ENCODE measurements at regions of chr13 and their contacts with region 1.

Region 1: GRCh38 chr13:110412132-110412914 is 105.2 kb downstream of the COL4A2 start:
- DNase-seq: peak; percentile 87 to 92 (median 88)
- ATAC-seq: peak; percentile 80 to 86 (median 83)
- H3K4me3 ChIP-seq: no peak overlapping the region
- H3K27ac ChIP-seq: peak overlapping the region; percentile 51 to 95 (median 83)
- H3K4me1 ChIP-seq: peaks cover 11 to 97% (median 76%) of the 10 kb centered on the region in 12 donors
- H3K27me3 ChIP-seq: no peaks in the 10 kb centered on the region
- CTCF ChIP-seq: peak; percentile 87 to 99 (median 92)
- POLR2A ChIP-seq: peak in 1 of 2 donors; percentile 26

Region 2: DNA sequence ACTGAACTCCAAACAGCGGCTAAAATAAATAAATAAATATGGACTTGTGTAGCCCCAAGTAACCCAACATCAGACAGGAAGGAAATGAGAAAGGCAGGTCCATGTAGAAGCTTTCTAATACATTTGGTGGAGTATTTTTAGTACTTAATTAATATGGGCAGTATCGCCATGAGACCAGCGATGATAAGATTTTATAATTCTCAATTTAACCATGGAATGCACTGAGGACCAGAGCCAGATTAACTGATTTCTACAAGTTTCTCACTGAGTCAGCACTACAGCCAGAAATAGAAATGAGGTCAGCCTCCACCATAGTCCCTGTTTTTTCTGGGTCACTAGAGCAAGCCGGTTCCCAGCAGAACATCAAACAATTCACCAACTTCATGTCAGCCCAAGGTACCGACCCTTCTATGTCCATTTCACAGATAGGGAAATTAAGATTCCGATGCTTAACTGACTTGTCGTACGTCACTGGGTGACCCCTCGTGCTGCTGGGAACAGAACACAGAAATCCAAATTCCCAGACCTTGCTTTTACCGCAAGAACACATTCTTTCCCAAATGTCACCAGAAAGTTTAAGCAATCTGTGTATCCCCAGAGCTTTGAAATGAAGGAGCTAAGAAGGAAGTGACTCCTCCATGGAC is 195.8 kb before region 1 on chr13:
- intact Hi-C with region 1: loop called in 4 of 10 experiments (anchors 5 kb)
- DNase-seq: peak in 3 of 5 donors; percentile 37 to 56 (median 51)
- ATAC-seq: peak; percentile 61 to 68 (median 64)
- H3K4me3 ChIP-seq: no peak overlapping the region
- H3K27ac ChIP-seq: peak overlapping the region; percentile 28 to 81 (median 55)
- H3K4me1 ChIP-seq: peaks cover 6 to 72% (median 58%) of the 10 kb centered on the region in 12 donors
- H3K27me3 ChIP-seq: no peaks in the 10 kb centered on the region
- CTCF ChIP-seq: no peak
- POLR2A ChIP-seq: no peak

Region 3: GRCh38 chr13:110244071-110244830 is 168.1 kb before region 1 on chr13:
- intact Hi-C with region 1: loop called in 1 of 10 experiments (anchors 5 kb)
- DNase-seq: no peak
- ATAC-seq: peak in 2 of 4 donors; percentile 23 to 33
- H3K4me3 ChIP-seq: no peak overlapping the region
- H3K27ac ChIP-seq: peak overlapping the region; percentile 30 to 84 (median 68)
- H3K4me1 ChIP-seq: peaks cover 10 to 99% (median 81%) of the 10 kb centered on the region in 12 donors
- H3K27me3 ChIP-seq: no peaks in the 10 kb centered on the region
- CTCF ChIP-seq: no peak
- POLR2A ChIP-seq: no peak

Region 4: DNA sequence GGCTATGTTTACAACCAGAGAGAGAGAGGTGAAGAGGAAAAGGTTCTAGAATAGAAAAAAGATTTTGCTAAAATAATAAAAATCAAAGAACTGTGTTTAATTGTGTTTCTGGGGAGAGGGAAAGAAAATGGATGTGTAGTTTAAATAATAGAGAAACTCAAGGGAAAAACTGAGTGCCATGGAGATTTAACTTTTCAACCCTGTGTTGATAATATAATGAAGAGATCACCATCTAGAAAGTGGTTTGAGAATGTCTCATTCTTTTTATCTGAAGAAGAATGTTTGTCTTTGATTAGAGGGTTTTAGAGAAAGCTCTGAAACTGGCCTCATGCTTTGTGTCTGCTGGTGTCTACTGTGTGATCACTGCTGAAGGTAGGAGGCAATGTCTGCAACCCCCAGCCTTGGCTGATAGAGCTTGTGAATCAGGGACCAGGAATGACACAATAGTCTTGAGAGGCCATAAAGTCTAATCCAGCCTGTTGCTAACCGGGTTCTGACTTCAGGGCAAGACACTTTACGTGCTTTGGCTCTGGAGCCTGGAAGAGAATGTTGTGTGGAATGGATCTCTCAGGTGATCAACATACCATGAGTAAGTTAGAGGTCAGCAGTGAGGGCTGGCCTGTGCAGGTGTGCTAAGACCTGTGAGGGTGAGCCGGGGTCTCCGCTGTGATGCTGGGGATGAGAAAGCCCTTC is 99.8 kb before region 1 on chr13:
- intact Hi-C with region 1: loop called in 9 of 10 experiments (anchors 2 to 10 kb)
- DNase-seq: peak in 1 of 5 donors; percentile 14
- ATAC-seq: no peak
- H3K4me3 ChIP-seq: peak overlapping the region in 9 of 12 donors; percentile 67 to 93 (median 83)
- H3K27ac ChIP-seq: peak overlapping the region in 11 of 12 donors; percentile 50 to 99 (median 96)
- H3K4me1 ChIP-seq: peaks cover 17 to 90% (median 73%) of the 10 kb centered on the region in 12 donors
- H3K27me3 ChIP-seq: peaks cover 0 to 29% (median 0%) of the 10 kb centered on the region in 9 donors
- CTCF ChIP-seq: no peak
- POLR2A ChIP-seq: no peak

Region 5: DNA sequence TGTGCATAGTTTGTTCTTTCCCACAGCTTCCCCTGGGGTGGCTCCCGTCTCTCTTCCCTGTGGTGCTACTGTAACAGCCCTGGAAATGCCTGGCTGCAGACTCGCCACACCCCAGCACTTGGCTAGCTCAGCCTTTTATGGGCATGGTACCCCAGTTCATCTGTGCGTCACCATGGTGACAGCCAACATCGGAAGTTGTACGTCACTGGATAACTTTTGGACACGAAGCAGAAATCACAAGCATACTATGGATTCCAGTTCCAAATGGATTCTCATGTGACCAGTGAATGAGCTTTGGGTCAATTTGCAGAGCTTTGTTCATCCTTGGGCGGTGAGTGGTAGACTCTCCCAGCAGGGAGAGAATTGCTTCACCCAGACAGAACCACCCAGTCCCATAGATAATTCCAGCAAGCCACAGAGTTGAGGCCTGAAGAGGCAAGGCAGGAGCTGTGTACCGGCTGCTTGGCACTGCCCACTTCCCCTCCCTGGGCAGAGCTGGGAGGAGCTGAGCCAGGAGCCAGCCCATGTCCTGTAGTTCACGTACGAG is 50.9 kb before region 1 on chr13:
- intact Hi-C with region 1: loop called in 1 of 10 experiments (anchors 5 kb)
- DNase-seq: peak; percentile 79 to 88 (median 83)
- ATAC-seq: peak; percentile 86 to 93 (median 88)
- H3K4me3 ChIP-seq: peak overlapping the region in 1 of 12 donors; percentile 0
- H3K27ac ChIP-seq: peak overlapping the region; percentile 51 to 91 (median 79)
- H3K4me1 ChIP-seq: peaks cover 6 to 62% (median 42%) of the 10 kb centered on the region in 12 donors
- H3K27me3 ChIP-seq: no peaks in the 10 kb centered on the region
- CTCF ChIP-seq: no peak
- POLR2A ChIP-seq: no peak

Region 6: DNA sequence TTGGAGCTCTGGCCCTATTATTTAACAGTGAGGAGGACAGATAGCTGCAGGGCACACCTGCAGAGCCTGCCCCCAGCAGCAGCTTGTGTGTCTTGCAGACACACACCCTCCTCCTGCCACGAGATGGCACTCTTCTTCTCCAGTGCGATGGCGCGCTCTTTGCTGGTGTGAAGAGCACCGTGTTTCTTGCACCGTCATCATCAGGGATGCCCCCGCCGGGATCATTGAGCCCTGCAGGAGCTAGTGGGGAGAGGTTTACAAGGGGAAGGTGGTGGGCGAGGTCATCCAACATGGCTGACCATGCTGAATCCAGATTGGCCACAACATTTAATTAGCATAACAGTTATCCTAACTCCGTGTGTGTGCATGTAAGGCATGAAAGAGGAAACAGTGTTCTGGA is 43.6 kb after region 1 on chr13:
- intact Hi-C with region 1: no loop called
- DNase-seq: peak; percentile 69 to 86 (median 82)
- ATAC-seq: peak; percentile 62 to 89 (median 84)
- H3K4me3 ChIP-seq: no peak overlapping the region
- H3K27ac ChIP-seq: peak overlapping the region in 2 of 12 donors; percentile 17 to 33
- H3K4me1 ChIP-seq: peaks cover 0 to 15% (median 1%) of the 10 kb centered on the region in 12 donors
- H3K27me3 ChIP-seq: no peaks in the 10 kb centered on the region
- CTCF ChIP-seq: peak; percentile 56 to 89 (median 75)
- POLR2A ChIP-seq: no peak

Region 7: DNA sequence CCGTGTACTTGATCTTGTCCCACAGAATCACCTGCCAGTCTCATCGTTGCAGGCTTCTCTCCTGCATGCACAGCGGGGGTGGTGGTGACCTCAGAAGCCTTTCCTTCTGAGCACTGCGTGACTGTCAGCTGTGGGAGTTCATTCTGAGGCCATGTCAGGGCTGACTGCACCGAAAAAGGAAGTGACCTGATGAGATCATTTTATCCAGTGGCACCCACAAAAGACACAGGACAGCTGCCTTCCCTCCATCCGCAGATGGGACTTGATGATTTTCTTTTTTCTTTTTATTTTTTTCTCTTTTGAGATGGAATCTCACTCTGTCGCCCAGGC is 59.5 kb after region 1 on chr13:
- intact Hi-C with region 1: no loop called
- DNase-seq: peak in 4 of 5 donors; percentile 64 to 75 (median 72)
- ATAC-seq: peak; percentile 59 to 86 (median 70)
- H3K4me3 ChIP-seq: no peak overlapping the region
- H3K27ac ChIP-seq: peak overlapping the region in 7 of 12 donors; percentile 19 to 59 (median 43)
- H3K4me1 ChIP-seq: peaks cover 0 to 18% (median 6%) of the 10 kb centered on the region in 12 donors
- H3K27me3 ChIP-seq: no peaks in the 10 kb centered on the region
- CTCF ChIP-seq: no peak
- POLR2A ChIP-seq: no peak

Measured in heart left ventricle (tissue), 16 donors.